ENCODE measurements at regions of chr19 and their contacts with region 1.

Region 1: DNA sequence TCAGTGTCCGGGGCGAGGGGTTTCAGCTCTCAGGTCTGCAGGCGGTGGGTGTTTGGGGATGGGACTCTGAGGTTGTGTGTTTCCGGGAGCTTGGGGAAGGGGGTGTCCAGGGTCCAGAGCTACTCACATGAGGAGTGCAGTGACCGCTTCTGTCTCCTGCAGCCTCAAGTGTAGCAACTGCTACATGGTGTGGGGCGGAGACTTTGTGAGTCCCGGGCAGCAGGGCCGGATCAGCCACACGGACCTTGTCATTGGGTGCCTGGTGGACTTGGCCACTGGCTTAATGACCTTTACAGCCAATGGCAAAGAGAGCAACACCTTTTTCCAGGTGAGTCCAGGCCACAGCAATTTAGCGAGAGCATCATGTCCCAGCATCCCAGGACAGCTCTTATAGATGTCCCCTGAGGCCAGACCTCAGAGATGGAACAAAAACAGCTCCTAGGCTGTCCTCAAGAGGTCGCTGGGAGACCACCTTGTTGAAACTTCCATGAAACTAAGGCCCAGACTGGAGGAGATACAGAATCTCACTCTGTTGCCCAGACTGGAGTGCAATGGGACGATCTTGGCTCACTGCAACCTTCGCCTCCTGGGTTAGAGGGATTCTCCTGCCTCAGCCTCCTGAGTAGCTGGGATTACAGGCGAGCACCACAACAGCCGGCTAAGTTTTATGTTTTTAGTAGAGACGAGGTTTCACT is 44.9 kb downstream of the RYR1 start:
- DNase-seq: no peak
- H3K4me3 ChIP-seq: no peak overlapping the region
- H3K27ac ChIP-seq: no peak overlapping the region
- H3K4me1 ChIP-seq: no peaks in the 10 kb centered on the region
- H3K27me3 ChIP-seq: no peaks in the 10 kb centered on the region
- CTCF ChIP-seq: no peak
- POLR2A ChIP-seq: no peak

Region 2: DNA sequence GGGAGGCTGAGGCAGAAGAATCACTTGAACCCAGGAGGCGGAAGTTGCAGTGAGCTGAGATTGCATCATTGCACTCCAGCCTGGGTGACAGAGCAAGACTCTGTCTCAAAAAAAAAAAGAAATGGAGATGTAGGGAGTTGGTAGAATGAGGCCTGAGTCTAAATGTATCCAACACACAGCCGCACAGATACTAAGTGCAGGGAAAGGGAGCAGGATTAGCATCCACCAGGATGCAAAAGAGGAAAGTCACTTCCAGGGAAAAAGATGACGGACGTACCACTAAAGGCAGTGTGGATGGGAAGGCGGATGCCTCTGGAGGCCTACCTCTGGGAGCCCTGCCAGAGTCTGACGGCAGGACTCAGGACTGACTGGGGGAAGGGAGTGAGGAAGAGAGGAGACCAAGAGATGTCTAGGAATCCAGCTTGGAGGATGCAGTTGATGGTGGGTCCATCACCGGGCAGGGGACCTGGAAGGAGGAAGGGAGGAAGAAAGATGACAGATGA is 68.7 kb before region 1 on chr19:
- intact Hi-C with region 1: loop called (anchors 2 kb)
- DNase-seq: no peak
- H3K4me3 ChIP-seq: no peak overlapping the region
- H3K27ac ChIP-seq: no peak overlapping the region
- H3K4me1 ChIP-seq: no peaks in the 10 kb centered on the region
- H3K27me3 ChIP-seq: no peaks in the 10 kb centered on the region
- CTCF ChIP-seq: no peak
- POLR2A ChIP-seq: no peak

Region 3: GRCh38 chr19:38433268-38433733 is 45.1 kb before region 1 on chr19 and contains the start of gene RYR1:
- intact Hi-C with region 1: no loop called
- DNase-seq: peak in 1 of 2 donors; percentile 53
- H3K4me3 ChIP-seq: peak within 1 kb of the TSS; percentile 18 to 33 (median 32)
- H3K27ac ChIP-seq: no peak within 1 kb of the TSS
- H3K4me1 ChIP-seq: no peaks in the 10 kb centered on the region
- H3K27me3 ChIP-seq: peaks cover 0 to 27% of the 10 kb centered on the region in 2 donors
- CTCF ChIP-seq: no peak
- POLR2A ChIP-seq: no peak
- total RNA-seq, gene RYR1: 1.3 to 6.7 (median 3.5) TPM

Region 4: GRCh38 chr19:38514812-38515633 is 36.6 kb after region 1 on chr19:
- intact Hi-C with region 1: loop called (anchors 1 kb)
- DNase-seq: peak in 1 of 2 donors; percentile 50
- H3K4me3 ChIP-seq: peak overlapping the region in 1 of 3 donors; percentile 23
- H3K27ac ChIP-seq: no peak overlapping the region
- H3K4me1 ChIP-seq: no peaks in the 10 kb centered on the region
- H3K27me3 ChIP-seq: peaks cover 0 to 4% of the 10 kb centered on the region in 2 donors
- CTCF ChIP-seq: peak; percentile 46 to 78 (median 51)
- POLR2A ChIP-seq: no peak